ENCODE measurements at regions of chr19 and their contacts with region 1.

Region 1: GRCh38 chr19:53431399-53432087 is at the start of gene ZNF761:
- DNase-seq: peak; percentile 87 to 90
- ATAC-seq: peak; percentile 98
- H3K4me3 ChIP-seq: peak within 1 kb of the TSS; percentile 74 to 91 (median 81)
- H3K27ac ChIP-seq: peak within 1 kb of the TSS; percentile 72 to 74 (median 74)
- H3K4me1 ChIP-seq: peaks cover 0 to 7% of the 10 kb centered on the region in 2 donors
- H3K27me3 ChIP-seq: no peaks in the 10 kb centered on the region
- CTCF ChIP-seq: peak in 4 of 5 experiments; percentile 35 to 45 (median 40)
- POLR2A ChIP-seq: peak; percentile 67 to 84
- total RNA-seq, gene ZNF761: 3.7 to 7.0 (median 4.1) TPM

Region 2: DNA sequence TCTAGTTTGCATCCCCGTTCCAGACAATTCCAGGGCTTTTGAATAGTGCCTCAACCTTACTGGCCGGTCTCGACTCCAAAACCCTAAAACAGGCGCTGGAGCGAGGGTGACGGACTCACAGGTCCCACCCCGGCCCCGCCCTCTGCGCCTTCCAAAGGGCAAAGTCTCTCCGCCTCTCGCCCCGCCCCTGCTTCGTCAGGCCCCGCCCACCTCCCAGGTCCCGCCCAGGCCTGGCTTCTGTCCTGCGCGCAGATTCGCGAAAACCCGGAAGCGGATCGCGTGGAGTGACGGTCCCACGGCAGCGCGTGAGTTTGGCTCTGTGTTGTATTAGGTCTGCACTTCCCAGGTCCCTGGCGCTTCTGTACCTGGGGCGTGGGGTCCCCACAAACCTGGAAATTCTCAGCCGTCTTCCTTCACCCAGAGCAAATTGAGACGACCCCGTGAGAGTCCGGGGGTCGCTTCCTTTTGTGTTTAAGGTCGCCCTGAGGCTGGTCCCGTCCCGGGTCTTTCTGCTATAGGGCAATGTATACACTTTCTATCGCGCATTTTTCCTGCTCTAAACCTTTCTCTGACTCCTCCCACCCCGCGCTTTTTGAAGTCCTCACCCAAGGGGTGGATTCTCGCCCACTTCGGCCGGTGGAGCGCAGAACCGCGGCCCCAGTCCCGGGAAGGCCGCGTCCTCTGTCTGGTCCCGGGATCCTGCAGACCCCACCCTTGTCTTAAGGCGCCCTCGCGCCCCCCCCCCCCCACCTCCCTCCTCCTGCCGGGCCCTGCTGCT is 36.1 kb after region 1 on chr19 and contains the start of gene ZNF813:
- in situ Hi-C with region 1: no loop called
- intact Hi-C with region 1: loop called (anchors 1 kb)
- DNase-seq: peak; percentile 80 to 83
- ATAC-seq: peak; percentile 92 to 93
- H3K4me3 ChIP-seq: peak within 1 kb of the TSS; percentile 64 to 80 (median 74)
- H3K27ac ChIP-seq: peak within 1 kb of the TSS; percentile 43 to 73 (median 69)
- H3K4me1 ChIP-seq: peaks cover 0 to 10% of the 10 kb centered on the region in 2 donors
- H3K27me3 ChIP-seq: peaks cover 3 to 32% (median 4%) of the 10 kb centered on the region in 3 donors
- CTCF ChIP-seq: no peak
- POLR2A ChIP-seq: peak in 1 of 2 donors; percentile 22
- total RNA-seq, gene ZNF813: 0.29 to 1.1 (median 0.57) TPM

Region 3: GRCh38 chr19:53520550-53521372 is 89.2 kb after region 1 on chr19:
- in situ Hi-C with region 1: no loop called
- intact Hi-C with region 1: loop called (anchors 2 kb)
- DNase-seq: peak; percentile 90 to 94
- ATAC-seq: peak; percentile 99 to 100
- H3K4me3 ChIP-seq: peak overlapping the region; percentile 59 to 74 (median 62)
- H3K27ac ChIP-seq: peak overlapping the region; percentile 61 to 89 (median 75)
- H3K4me1 ChIP-seq: peaks cover 0 to 10% of the 10 kb centered on the region in 2 donors
- H3K27me3 ChIP-seq: no peaks in the 10 kb centered on the region
- CTCF ChIP-seq: no peak
- POLR2A ChIP-seq: no peak

Region 4: GRCh38 chr19:53730390-53730789 is 298.8 kb after region 1 on chr19:
- in situ Hi-C with region 1: loop called in 1 of 4 experiments (anchors 25 kb)
- intact Hi-C with region 1: no loop called
- DNase-seq: no peak
- ATAC-seq: no peak
- H3K4me3 ChIP-seq: no peak overlapping the region
- H3K27ac ChIP-seq: no peak overlapping the region
- H3K4me1 ChIP-seq: no peaks in the 10 kb centered on the region
- H3K27me3 ChIP-seq: no peaks in the 10 kb centered on the region
- CTCF ChIP-seq: no peak
- POLR2A ChIP-seq: no peak

Region 5: DNA sequence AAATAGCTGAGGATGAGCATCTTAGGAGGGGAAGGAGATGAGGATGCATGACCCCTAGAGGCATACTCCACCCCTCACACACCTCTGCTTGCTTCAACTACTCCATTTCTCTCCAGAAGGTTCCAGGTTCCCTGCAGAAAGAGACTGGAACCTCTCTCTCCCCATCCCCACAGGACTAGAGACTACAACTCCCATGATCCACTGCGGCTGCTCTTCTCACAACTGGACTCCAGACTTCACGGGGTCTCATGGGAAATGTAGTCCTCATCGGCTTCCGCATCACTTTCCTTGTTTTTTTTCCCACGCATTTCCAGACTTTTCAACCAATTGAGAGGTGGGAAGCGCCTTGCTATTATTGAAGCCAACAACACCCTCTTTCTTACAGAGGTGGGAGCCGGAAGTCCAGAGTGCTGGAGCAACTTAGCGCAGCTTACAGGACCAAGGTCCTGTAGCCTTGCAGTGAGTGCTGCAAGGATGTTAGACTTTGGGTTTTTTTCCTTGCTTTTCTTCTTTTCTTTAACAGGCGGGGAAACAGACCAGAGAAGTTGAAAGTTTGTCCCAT is 546.0 kb after region 1 on chr19:
- in situ Hi-C with region 1: no loop called
- intact Hi-C with region 1: loop called (anchors 5 kb)
- DNase-seq: peak; percentile 76 to 77
- ATAC-seq: peak; percentile 69 to 81
- H3K4me3 ChIP-seq: peak overlapping the region; percentile 48 to 59 (median 53)
- H3K27ac ChIP-seq: peak overlapping the region; percentile 49 to 72 (median 68)
- H3K4me1 ChIP-seq: peaks cover 13 to 18% of the 10 kb centered on the region in 2 donors
- H3K27me3 ChIP-seq: peaks cover 0 to 19% (median 5%) of the 10 kb centered on the region in 3 donors
- CTCF ChIP-seq: no peak
- POLR2A ChIP-seq: no peak

Measured in gastrocnemius medialis (tissue), 4 donors.